Activated CD4-positive, alpha-beta T cell treated with anti-CD3 and anti-CD28 coated beads for 36 hours (primary cell): ENCODE measurements at regions of chr7 and their contacts with region 1.

Region 1: DNA sequence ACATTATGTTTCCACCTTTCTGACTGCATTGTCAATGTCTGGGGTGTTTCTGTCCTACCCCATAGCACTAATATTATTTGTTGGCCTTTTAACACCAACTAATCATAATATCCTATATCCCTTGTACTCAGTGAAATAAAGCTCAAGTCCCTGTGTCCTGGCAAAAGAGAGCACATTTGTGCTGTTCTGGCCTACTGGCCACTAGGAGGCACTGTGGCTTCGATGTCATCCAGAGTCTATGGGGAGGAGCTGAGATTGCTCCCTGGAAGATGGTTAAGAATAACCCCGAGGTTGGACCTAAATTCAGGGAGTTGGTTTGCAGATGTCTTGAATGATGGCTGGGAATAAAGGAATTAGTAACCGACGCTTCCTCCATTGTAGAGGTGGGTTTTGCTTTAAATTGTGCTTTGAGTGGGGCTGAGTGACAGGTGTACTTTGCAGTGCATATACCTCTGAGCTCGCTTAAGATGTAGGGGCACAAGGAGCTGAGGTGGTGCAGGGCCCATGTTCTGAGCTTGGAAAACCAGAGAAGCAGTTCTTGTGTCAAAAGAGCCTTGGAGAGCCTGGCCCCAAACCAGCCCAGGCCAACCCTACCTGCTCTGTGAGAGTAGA is 191.2 kb upstream of the PRSS1 start:
- DNase-seq: peak; percentile 76
- ATAC-seq: peak; percentile 80
- H3K4me3 Mint-ChIP-seq: peak overlapping the region; percentile 13
- H3K27ac Mint-ChIP-seq: no peak overlapping the region
- H3K4me1 Mint-ChIP-seq: peaks cover 2% of the 10 kb centered on the region
- H3K27me3 Mint-ChIP-seq: no peaks in the 10 kb centered on the region

Region 2: DNA sequence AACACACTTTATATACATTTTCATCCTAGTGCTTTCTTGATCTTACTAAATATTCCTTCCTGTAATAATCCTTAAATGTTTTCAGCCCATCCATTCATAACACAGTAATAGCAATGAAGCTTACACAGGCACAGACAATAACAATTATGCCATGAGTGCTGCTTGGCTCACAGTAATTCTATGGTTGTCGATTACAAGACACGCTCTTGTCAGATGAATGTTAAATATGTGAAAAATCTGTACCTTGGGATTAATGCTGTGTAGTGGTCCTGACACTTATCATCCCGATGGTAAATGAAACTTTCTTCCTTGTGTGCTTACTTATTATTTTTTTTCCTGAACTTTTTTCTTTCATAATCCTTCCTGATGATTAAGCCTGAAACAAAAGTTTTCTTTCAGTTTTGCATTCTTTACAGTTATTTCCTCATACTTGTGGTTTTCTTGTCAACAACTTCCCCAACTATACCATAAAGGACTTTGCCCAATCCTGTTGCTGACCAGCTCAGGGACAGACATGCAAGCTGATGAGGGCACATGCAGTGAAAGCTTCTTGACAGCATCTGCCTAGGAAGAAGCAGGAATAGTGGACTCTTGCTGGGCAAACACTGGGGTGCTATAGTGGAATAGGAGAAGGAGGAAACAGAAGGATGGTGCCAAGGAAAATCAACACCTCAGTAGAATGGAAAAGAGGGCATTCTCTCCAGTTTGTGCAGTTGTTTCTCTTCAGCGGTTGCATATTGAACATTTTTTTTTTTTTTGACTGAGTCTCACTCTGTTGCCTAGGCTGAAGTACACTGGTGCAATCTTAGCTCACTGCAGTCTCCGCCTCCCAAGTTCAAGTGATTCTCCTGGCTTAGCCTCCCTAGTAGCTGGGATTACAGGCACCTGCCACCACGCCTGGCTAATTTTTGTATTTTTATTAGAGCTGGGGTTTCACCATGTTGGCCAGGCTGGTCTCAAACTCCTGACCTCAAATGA is 453.2 kb before region 1 on chr7:
- CTCF ChIA-PET with region 1: no interaction called
- POLR2A ChIA-PET with region 1: no interaction called
- intact Hi-C with region 1: no loop called
- DNase-seq: no peak
- ATAC-seq: no peak
- H3K4me3 Mint-ChIP-seq: no peak overlapping the region
- H3K27ac Mint-ChIP-seq: no peak overlapping the region
- H3K4me1 Mint-ChIP-seq: no peaks in the 10 kb centered on the region
- H3K27me3 Mint-ChIP-seq: peaks cover 4% of the 10 kb centered on the region

Region 3: GRCh38 chr7:142338633-142339501 is 219.2 kb before region 1 on chr7:
- CTCF ChIA-PET with region 1: no interaction called
- POLR2A ChIA-PET with region 1: no interaction called
- intact Hi-C with region 1: no loop called
- DNase-seq: peak; percentile 57
- ATAC-seq: peak; percentile 43
- H3K4me3 Mint-ChIP-seq: peak overlapping the region; percentile 14
- H3K27ac Mint-ChIP-seq: peak overlapping the region; percentile 68
- H3K4me1 Mint-ChIP-seq: peaks cover 16% of the 10 kb centered on the region
- H3K27me3 Mint-ChIP-seq: peaks cover 5% of the 10 kb centered on the region

Region 4: GRCh38 chr7:142508258-142508689 is 49.8 kb before region 1 on chr7:
- CTCF ChIA-PET with region 1: interaction called, 3 read pairs
- POLR2A ChIA-PET with region 1: no interaction called
- intact Hi-C with region 1: loop called in 1 of 2 experiments (anchors 5 kb)
- DNase-seq: no peak
- ATAC-seq: peak; percentile 54
- H3K4me3 Mint-ChIP-seq: no peak overlapping the region
- H3K27ac Mint-ChIP-seq: peak overlapping the region; percentile 45
- H3K4me1 Mint-ChIP-seq: peaks cover 44% of the 10 kb centered on the region
- H3K27me3 Mint-ChIP-seq: no peaks in the 10 kb centered on the region

Region 5: DNA sequence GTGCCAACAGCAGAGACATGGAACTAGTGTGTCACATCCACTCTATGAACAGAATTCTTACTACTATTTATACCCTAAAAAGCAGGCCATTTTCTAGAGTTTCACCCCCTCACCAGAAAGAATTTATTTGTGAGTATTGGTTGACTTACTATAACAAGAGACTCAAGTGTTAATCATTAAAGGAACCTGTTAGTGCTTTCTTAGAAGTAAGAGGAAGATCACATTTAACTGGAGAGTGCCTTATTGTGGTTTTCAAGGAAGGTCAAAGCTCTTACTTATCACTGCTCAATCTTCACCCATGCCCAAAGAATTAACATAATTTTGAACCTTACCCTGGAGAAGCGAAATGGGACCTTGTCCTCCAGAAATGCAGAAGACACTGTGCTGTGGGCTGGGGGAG is 21.9 kb after region 1 on chr7:
- CTCF ChIA-PET with region 1: interaction called, 17 read pairs
- POLR2A ChIA-PET with region 1: no interaction called
- intact Hi-C with region 1: loop called in 1 of 2 experiments (anchors 1 kb)
- DNase-seq: no peak
- ATAC-seq: no peak
- H3K4me3 Mint-ChIP-seq: no peak overlapping the region
- H3K27ac Mint-ChIP-seq: peak overlapping the region; percentile 63
- H3K4me1 Mint-ChIP-seq: peaks cover 34% of the 10 kb centered on the region
- H3K27me3 Mint-ChIP-seq: no peaks in the 10 kb centered on the region

Region 6: DNA sequence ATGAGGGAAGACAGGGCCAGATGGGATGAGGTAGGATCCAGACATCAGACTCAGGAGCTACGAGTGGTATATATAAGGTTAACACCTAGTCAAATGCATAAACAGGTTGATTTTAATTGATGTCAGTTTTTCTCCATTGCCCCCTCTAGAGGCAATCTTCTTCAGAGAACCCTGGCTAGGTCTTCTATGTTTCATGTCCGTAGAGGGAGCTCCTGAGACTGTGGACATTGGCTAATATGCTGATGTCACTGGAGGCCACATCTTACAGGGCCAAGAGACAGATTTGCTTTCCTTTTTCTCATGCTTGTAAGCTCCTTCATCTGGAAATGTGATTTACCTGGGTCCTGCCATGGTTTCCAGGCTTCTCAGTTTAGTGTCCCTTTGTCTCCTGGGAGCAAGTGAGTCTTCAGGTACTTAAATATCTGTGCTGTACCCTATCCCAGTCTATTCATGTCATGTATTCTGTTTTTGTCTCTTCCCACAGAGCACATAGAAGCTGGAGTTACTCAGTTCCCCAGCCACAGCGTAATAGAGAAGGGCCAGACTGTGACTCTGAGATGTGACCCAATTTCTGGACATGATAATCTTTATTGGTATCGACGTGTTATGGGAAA is 29.6 kb after region 1 on chr7:
- CTCF ChIA-PET with region 1: interaction called, 17 read pairs
- POLR2A ChIA-PET with region 1: no interaction called
- intact Hi-C with region 1: loop called in 1 of 2 experiments (anchors 2 kb)
- DNase-seq: peak; percentile 15
- ATAC-seq: peak; percentile 64
- H3K4me3 Mint-ChIP-seq: no peak overlapping the region
- H3K27ac Mint-ChIP-seq: no peak overlapping the region
- H3K4me1 Mint-ChIP-seq: peaks cover 10% of the 10 kb centered on the region
- H3K27me3 Mint-ChIP-seq: no peaks in the 10 kb centered on the region

Region 7: GRCh38 chr7:142797386-142798377 is 239.6 kb after region 1 on chr7:
- CTCF ChIA-PET with region 1: no interaction called
- POLR2A ChIA-PET with region 1: no interaction called
- intact Hi-C with region 1: no loop called
- DNase-seq: peak; percentile 60
- ATAC-seq: peak; percentile 8
- H3K4me3 Mint-ChIP-seq: peak overlapping the region; percentile 99
- H3K27ac Mint-ChIP-seq: peak overlapping the region; percentile 99
- H3K4me1 Mint-ChIP-seq: peaks cover 64% of the 10 kb centered on the region
- H3K27me3 Mint-ChIP-seq: no peaks in the 10 kb centered on the region